Activated CD4-positive, alpha-beta T cell treated with anti-CD3 and anti-CD28 coated beads, Interleukin-2, amount 10 ng/mL, durations not matched to agents 7 days and 5 days (primary cell): ENCODE measurements at regions of chr17 and their contacts with region 1.

Region 1: DNA sequence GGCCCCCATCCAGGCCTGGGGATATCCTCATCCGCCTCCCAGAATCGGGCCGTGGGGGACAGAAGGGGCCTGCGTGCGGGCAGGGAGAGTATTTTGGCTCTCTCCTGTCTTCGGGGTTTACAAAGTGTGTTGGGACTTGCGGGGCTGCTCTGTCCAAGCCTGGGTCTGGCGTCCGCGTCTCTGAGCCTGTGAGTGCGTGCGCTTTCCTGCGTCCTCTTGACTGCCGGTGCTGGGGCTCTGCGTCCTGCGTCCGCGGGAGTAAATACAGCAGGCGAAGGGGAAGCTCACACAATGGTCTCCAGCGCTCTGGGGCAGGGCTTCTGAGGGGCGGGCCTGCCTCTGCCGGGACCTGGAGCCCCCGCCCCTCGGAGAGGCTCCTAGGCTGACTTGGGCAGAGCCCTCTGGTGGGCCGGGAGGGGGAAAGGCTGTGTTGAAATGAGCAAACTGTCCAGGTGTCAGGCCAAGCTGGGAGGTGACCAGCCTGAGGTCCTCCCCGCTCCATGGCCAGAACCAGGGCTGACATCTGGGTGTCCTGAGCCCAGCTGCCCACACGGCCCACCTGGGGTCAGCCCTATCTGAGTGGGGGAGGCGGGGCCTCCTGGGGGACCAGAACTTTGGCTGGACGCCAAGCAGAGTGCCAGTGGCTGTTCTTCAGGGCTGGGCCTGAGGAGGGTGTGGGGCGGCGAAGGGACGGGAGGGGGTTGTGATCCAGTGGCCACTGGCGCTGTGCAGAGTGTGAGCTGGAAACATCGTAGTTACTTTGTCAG is 233.6 kb downstream of the SEC14L1 start:
- DNase-seq: peak; percentile 86
- H3K4me3 Mint-ChIP-seq: peak overlapping the region; percentile 86
- H3K27ac Mint-ChIP-seq: peak overlapping the region; percentile 89
- H3K4me1 Mint-ChIP-seq: peaks cover 70% of the 10 kb centered on the region
- H3K27me3 Mint-ChIP-seq: no peaks in the 10 kb centered on the region

Region 2: GRCh38 chr17:77235370-77235941 is 138.9 kb before region 1 on chr17:
- CTCF ChIA-PET with region 1: no interaction called
- POLR2A ChIA-PET with region 1: no interaction called
- DNase-seq: peak; percentile 42
- H3K4me3 Mint-ChIP-seq: peak overlapping the region; percentile 66
- H3K27ac Mint-ChIP-seq: peak overlapping the region; percentile 89
- H3K4me1 Mint-ChIP-seq: peaks cover 21% of the 10 kb centered on the region
- H3K27me3 Mint-ChIP-seq: no peaks in the 10 kb centered on the region

Region 3: DNA sequence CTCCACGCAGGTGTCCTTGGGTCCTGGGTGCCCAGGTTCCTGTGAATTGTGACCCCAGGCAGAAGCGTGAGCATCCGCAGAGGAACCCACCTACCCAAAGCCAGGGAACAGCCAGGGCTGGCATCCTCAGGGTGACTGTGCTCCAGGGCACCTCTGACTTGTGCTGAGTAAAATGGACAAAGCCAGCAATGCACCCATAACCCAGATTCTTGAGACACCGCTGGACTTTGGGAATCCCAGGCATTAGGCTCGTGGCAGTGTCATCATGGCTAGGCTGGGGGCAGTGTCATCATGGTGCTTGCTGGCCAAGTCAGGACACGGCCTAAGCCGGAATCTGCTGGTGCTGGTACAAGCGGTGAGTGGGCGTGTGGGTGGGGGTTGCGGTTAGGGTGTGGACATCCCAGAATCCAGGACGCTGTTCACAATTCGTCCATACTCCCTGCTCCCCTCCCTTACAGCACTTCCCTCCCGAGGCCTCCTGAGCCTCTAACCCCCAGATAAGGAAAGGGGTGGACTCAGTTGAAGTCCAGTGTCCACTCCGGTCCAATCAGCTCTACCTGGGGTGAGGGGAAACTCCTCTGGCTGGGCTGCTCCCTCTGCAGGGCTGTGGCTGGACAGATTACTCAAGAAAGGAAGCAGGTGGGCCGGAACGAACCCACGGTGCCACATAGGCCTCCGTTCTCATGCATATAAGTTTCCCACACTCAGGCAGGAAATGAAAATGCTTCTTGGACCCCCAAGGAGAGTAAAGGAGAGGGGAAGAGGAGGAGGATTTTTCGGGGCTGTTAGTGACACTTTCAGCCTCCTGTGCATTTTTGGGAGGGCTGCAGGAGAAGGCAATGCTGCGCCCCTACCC is 94.7 kb before region 1 on chr17:
- CTCF ChIA-PET with region 1: no interaction called
- POLR2A ChIA-PET with region 1: no interaction called
- DNase-seq: no peak
- H3K4me3 Mint-ChIP-seq: no peak overlapping the region
- H3K27ac Mint-ChIP-seq: no peak overlapping the region
- H3K4me1 Mint-ChIP-seq: peaks cover 15% of the 10 kb centered on the region
- H3K27me3 Mint-ChIP-seq: peaks cover 40% of the 10 kb centered on the region

Region 4: DNA sequence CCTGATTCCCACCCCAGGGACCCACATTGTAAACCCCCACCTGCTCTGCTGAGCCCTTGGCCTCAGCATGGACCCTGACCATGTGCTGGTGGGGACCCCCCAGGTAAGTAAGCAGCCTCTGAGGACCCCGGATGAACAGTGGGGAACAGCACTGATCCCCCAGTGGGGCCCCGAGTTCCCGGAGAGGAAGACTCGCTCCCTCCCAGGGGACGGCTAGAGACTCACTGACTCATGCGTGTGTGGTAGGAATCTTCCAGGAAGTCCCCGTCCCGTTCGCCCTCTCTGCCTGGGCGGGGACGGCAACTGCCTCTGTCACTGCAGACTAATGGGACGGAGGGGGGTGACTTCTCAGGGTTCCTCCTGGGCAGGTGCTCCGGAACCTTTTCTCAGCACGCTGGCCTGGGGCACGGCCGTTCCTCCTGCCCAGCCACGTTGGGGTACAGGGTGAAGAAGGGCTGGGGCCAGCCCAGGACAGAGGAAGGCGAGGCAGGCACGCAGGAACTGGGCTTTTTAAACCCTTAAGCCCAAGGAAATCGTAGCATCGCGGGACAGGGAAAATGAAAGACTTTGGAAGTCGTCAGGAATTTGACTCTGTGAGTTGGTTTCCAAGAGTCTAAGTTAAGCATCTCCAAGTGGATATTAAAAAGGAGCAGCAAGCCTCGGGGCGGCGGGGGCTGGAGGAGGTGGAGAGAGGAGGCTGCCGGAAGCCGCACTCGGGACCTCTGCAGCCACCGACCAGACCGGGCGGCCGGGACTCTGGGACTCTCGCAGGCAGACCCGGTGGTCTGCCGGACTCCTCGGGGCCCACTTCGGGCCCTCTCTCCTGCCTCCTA is 54.9 kb before region 1 on chr17:
- CTCF ChIA-PET with region 1: no interaction called
- POLR2A ChIA-PET with region 1: no interaction called
- DNase-seq: peak; percentile 29
- H3K4me3 Mint-ChIP-seq: no peak overlapping the region
- H3K27ac Mint-ChIP-seq: peak overlapping the region; percentile 9
- H3K4me1 Mint-ChIP-seq: peaks cover 26% of the 10 kb centered on the region
- H3K27me3 Mint-ChIP-seq: peaks cover 5% of the 10 kb centered on the region

Region 5: DNA sequence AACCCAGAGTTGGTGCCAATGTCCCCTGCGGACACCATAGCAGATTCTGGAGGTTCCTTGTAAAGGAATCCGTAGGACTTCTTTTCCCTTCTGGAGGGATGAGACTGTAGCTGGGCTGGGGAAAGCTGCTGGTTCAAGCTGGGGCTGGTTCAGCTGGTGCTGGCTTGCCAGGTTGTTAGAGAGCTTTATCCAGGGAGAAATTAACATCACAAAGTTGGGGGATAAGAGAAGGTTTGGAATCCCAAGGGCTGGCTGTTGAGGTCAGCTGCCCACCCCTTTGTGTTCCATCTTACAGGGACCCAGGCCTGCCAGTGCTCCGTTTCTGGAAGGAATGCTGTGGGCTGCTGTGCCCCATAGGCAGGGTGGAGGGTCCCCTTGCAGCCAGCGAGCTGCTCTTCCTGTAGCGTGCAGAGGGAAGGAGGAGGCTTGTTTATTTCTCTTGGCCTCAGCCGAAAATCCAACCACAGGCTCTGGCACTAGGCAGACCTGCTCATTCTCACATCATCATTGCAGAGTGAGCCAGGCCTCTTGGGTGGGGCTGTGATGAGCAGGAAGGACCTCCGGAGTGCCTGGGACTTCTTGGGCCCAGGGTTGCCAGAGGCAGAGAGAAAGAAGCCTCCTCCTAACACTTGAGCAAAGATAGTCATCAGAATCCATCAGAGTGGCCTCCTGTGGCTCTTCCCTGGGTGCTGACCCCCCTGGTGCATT is 17.5 kb after region 1 on chr17:
- CTCF ChIA-PET with region 1: interaction called, 25 read pairs
- POLR2A ChIA-PET with region 1: no interaction called
- DNase-seq: peak; percentile 67
- H3K4me3 Mint-ChIP-seq: peak overlapping the region; percentile 86
- H3K27ac Mint-ChIP-seq: peak overlapping the region; percentile 95
- H3K4me1 Mint-ChIP-seq: peaks cover 87% of the 10 kb centered on the region
- H3K27me3 Mint-ChIP-seq: no peaks in the 10 kb centered on the region